GM12878 (cell line): ENCODE measurements at regions of chr18 and their contacts with region 1.

Region 1: GRCh38 chr18:62714671-62715435 is 488 bp upstream of the PHLPP1 start:
- DNase-seq: peak; percentile 93
- ATAC-seq: peak; percentile 83
- H3K4me3 ChIP-seq: peak overlapping the region; percentile 79
- H3K27ac ChIP-seq: no peak overlapping the region
- H3K4me1 ChIP-seq: 0 out of 2 replicates have a peak, but pooled peaks cover 2% of the 10 kb centered on the region
- H3K27me3 ChIP-seq: no peaks in the 10 kb centered on the region
- CTCF ChIP-seq: peak; percentile 73 to 86 (median 78)
- EP300 ChIP-seq: peak in 1 of 2 experiments; percentile 31; a peak in 1 of 4 replicates
- POLR2A ChIP-seq: no peak; the same call in 1 of the 2 replicates
- RAD21 ChIP-seq: peak; percentile 79

Region 2: GRCh38 chr18:62566199-62566598 is 148.7 kb before region 1 on chr18:
- CTCF ChIA-PET with region 1: no interaction called
- POLR2A ChIA-PET with region 1: no interaction called
- RAD21 ChIA-PET with region 1: no interaction called
- SMC1A ChIA-PET with region 1: no interaction called
- in situ Hi-C with region 1: no loop called
- intact Hi-C with region 1: no loop called
- DNase-seq: no peak
- ATAC-seq: no peak
- H3K4me3 ChIP-seq: no peak overlapping the region
- H3K27ac ChIP-seq: no peak overlapping the region
- H3K4me1 ChIP-seq: no peaks in the 10 kb centered on the region
- H3K27me3 ChIP-seq: no peaks in the 10 kb centered on the region
- CTCF ChIP-seq: peak in 2 of 3 experiments; percentile 5 to 20; a peak in 2 of 6 replicates
- EP300 ChIP-seq: no peak
- POLR2A ChIP-seq: no peak
- RAD21 ChIP-seq: no peak

Region 3: GRCh38 chr18:62838475-62839098 is 123.7 kb after region 1 on chr18:
- CTCF ChIA-PET with region 1: no interaction called
- POLR2A ChIA-PET with region 1: no interaction called
- RAD21 ChIA-PET with region 1: no interaction called
- SMC1A ChIA-PET with region 1: interaction called, 4 read pairs
- in situ Hi-C with region 1: no loop called
- intact Hi-C with region 1: loop called (anchors 2 kb)
- DNase-seq: peak; percentile 62
- ATAC-seq: peak; percentile 86
- H3K4me3 ChIP-seq: peak overlapping the region; percentile 2; the same call in 1 of the 2 replicates
- H3K27ac ChIP-seq: peak overlapping the region; percentile 71
- H3K4me1 ChIP-seq: peaks cover 20% of the 10 kb centered on the region; the same call in 1 of the 2 replicates
- H3K27me3 ChIP-seq: no peaks in the 10 kb centered on the region
- CTCF ChIP-seq: no peak
- EP300 ChIP-seq: no peak
- POLR2A ChIP-seq: no peak
- RAD21 ChIP-seq: no peak

Region 4: GRCh38 chr18:62982600-62983251 is 267.9 kb after region 1 on chr18:
- CTCF ChIA-PET with region 1: interaction called, 13 read pairs
- POLR2A ChIA-PET with region 1: interaction called, 3 read pairs
- RAD21 ChIA-PET with region 1: interaction called, 23 read pairs
- SMC1A ChIA-PET with region 1: interaction called, 8 read pairs
- in situ Hi-C with region 1: loop called (anchors 5 kb)
- intact Hi-C with region 1: loop called (anchors 1 kb)
- DNase-seq: peak; percentile 7
- ATAC-seq: peak; percentile 88
- H3K4me3 ChIP-seq: no peak overlapping the region
- H3K27ac ChIP-seq: no peak overlapping the region
- H3K4me1 ChIP-seq: no peaks in the 10 kb centered on the region
- H3K27me3 ChIP-seq: no peaks in the 10 kb centered on the region
- CTCF ChIP-seq: peak; percentile 75 to 82 (median 78)
- EP300 ChIP-seq: no peak
- POLR2A ChIP-seq: no peak
- RAD21 ChIP-seq: peak; percentile 98

Region 5: DNA sequence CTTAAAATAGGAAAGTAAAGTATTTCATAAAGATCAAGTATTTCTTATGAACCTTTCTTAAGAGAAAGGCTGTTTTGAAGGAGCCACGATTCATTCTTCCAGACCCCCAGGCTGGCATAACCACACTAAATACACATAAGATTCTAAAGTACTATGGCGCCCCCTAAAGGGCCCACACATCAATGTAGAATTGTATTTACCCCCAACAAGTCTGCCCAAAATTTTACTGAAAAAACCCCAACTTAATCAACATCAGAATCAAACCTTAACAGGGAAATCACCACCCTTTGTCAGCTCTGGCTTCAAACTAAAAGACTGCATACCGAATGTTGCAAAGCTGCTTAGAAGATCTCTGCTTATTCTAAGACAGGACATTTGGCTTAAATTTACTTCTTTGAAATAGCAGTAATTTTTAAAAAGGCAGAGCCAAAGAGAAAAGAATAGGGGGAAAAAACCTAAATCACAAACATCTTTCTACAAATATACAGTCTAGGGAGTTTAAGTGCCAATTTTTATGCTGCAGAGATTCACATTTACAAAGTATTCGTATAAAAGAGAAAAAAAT is 625.1 kb after region 1 on chr18:
- CTCF ChIA-PET with region 1: interaction called, 3 read pairs
- POLR2A ChIA-PET with region 1: no interaction called
- RAD21 ChIA-PET with region 1: interaction called, 3 read pairs
- SMC1A ChIA-PET with region 1: no interaction called
- in situ Hi-C with region 1: loop called (anchors 25 kb)
- intact Hi-C with region 1: no loop called
- DNase-seq: no peak
- ATAC-seq: peak; percentile 82
- H3K4me3 ChIP-seq: no peak overlapping the region
- H3K27ac ChIP-seq: no peak overlapping the region
- H3K4me1 ChIP-seq: no peaks in the 10 kb centered on the region
- H3K27me3 ChIP-seq: no peaks in the 10 kb centered on the region
- CTCF ChIP-seq: peak; percentile 39 to 59 (median 53)
- EP300 ChIP-seq: no peak
- POLR2A ChIP-seq: no peak
- RAD21 ChIP-seq: peak; percentile 57

Region 6: GRCh38 chr18:63808125-63808524 is 1093.3 kb after region 1 on chr18:
- CTCF ChIA-PET with region 1: no interaction called
- POLR2A ChIA-PET with region 1: no interaction called
- RAD21 ChIA-PET with region 1: no interaction called
- SMC1A ChIA-PET with region 1: no interaction called
- in situ Hi-C with region 1: no loop called
- intact Hi-C with region 1: no loop called
- DNase-seq: no peak
- ATAC-seq: no peak
- H3K4me3 ChIP-seq: no peak overlapping the region
- H3K27ac ChIP-seq: no peak overlapping the region
- H3K4me1 ChIP-seq: no peaks in the 10 kb centered on the region
- H3K27me3 ChIP-seq: peaks cover 0 to 8% of the 10 kb centered on the region in 2 experiments; a peak in 1 of 4 replicates
- CTCF ChIP-seq: no peak
- EP300 ChIP-seq: no peak
- POLR2A ChIP-seq: no peak
- RAD21 ChIP-seq: no peak